GM13977 (cell line): ENCODE measurements at regions of chr9 and their contacts with region 1.

Region 1: GRCh38 chr9:87812375-87813118 is 70.1 kb upstream of the SPATA31E1 start:
- DNase-seq: no peak
- CTCF ChIP-seq: peak; percentile 65

Region 2: GRCh38 chr9:87336914-87337333 is 475.6 kb before region 1 on chr9:
- in situ Hi-C with region 1: loop called (anchors 25 kb)
- DNase-seq: peak; percentile 60
- CTCF ChIP-seq: peak; percentile 65

Region 3: GRCh38 chr9:87742813-87743428 is 69.6 kb before region 1 on chr9:
- in situ Hi-C with region 1: no loop called
- DNase-seq: no peak
- CTCF ChIP-seq: no peak

Region 4: GRCh38 chr9:87894998-87895625 is 82.6 kb after region 1 on chr9:
- in situ Hi-C with region 1: no loop called
- DNase-seq: no peak
- CTCF ChIP-seq: no peak

Region 5: GRCh38 chr9:87950765-87951488 is 138.4 kb after region 1 on chr9:
- in situ Hi-C with region 1: no loop called
- DNase-seq: peak; percentile 43
- CTCF ChIP-seq: peak; percentile 53

Region 6: DNA sequence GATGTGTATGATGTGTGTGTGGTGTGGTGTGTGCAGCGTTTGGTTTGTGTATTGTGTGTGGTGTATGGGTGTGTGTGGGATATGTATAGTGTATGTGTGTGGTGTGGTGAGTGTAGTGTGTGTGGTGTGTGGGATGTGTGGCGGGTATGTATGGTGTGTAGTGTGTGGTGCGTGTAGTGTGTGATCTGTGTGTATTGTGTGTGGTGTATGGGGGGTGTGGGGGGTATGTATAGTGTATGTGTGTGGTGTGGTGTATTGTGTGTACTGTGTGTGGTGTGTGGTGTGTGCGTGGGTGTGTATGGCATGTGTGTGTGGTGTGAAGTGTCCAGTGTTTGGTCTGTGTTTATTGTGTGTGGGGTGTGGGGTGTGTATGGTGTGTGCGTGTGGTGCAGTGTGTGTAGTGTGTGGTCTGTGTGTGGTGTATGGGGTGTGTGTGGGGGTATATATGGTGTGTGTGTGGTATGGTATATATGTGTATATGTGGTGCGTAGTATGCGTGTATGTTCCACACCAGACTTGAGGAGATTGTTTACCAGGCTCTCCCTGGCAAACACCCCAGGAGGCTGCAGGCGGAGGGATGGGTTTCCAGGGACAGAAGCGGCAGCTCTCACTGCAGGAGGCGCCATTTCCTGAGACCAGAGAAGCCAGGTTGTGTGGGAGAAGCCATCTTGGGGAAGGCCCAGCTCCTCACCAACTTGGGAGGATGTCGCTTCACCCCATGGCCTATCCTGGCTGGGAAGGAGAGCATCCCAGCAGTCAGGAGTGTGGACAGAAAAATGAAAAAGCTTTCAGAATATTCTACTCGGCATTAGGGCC is 860.5 kb after region 1 on chr9:
- in situ Hi-C with region 1: no loop called
- DNase-seq: no peak
- CTCF ChIP-seq: no peak